Pancreas (tissue), 10 donors: ENCODE measurements at regions of chr12 and their contacts with region 1.

Region 1: DNA sequence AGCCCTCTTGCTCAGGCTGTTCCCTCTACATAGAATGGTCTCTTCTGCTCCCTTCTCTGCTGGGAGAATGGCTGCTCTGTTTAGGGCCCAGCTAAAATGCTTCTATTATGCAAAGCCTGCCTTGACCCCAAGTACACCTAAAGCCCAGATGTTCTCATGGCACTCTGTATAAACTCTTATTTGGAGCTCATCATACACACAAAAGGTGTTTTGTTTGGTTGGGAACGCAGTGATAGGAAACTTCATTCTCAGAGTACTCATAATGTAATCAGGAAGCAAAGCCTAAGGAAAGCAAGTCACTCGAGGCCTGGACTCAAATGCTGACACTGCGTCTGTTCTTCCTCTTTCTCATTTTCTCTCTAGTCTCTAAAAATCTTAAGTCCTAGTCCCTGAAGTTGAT is 38.2 kb upstream of the SYCP3 start:
- DNase-seq: no peak
- ATAC-seq: peak in 2 of 4 donors; percentile 24 to 36
- H3K4me3 ChIP-seq: no peak overlapping the region
- H3K27ac ChIP-seq: no peak overlapping the region
- H3K4me1 ChIP-seq: no peaks in the 10 kb centered on the region
- H3K27me3 ChIP-seq: no peaks in the 10 kb centered on the region
- CTCF ChIP-seq: no peak

Region 2: GRCh38 chr12:101375573-101375972 is 401.9 kb before region 1 on chr12:
- intact Hi-C with region 1: no loop called
- DNase-seq: no peak
- ATAC-seq: no peak
- H3K4me3 ChIP-seq: no peak overlapping the region
- H3K27ac ChIP-seq: no peak overlapping the region
- H3K4me1 ChIP-seq: no peaks in the 10 kb centered on the region
- H3K27me3 ChIP-seq: no peaks in the 10 kb centered on the region
- CTCF ChIP-seq: no peak

Region 3: GRCh38 chr12:101839324-101840283 is 62.1 kb after region 1 on chr12:
- intact Hi-C with region 1: loop called in 1 of 3 experiments (anchors 5 kb)
- DNase-seq: peak in 4 of 6 donors; percentile 40 to 72 (median 54)
- ATAC-seq: peak; percentile 70 to 97 (median 91)
- H3K4me3 ChIP-seq: no peak overlapping the region
- H3K27ac ChIP-seq: no peak overlapping the region
- H3K4me1 ChIP-seq: no peaks in the 10 kb centered on the region
- H3K27me3 ChIP-seq: no peaks in the 10 kb centered on the region
- CTCF ChIP-seq: peak; percentile 66 to 77 (median 74)